ENCODE measurements at regions of chr3 and their contacts with region 1.

Region 1: GRCh38 chr3:30676424-30677346 is 70.3 kb downstream of the TGFBR2 start:
- DNase-seq: no peak
- ATAC-seq: no peak
- H3K4me3 ChIP-seq: no peak overlapping the region
- H3K27ac ChIP-seq: no peak overlapping the region
- H3K4me1 ChIP-seq: peaks cover 2 to 10% of the 10 kb centered on the region in 2 donors
- H3K27me3 ChIP-seq: no peaks in the 10 kb centered on the region

Region 2: DNA sequence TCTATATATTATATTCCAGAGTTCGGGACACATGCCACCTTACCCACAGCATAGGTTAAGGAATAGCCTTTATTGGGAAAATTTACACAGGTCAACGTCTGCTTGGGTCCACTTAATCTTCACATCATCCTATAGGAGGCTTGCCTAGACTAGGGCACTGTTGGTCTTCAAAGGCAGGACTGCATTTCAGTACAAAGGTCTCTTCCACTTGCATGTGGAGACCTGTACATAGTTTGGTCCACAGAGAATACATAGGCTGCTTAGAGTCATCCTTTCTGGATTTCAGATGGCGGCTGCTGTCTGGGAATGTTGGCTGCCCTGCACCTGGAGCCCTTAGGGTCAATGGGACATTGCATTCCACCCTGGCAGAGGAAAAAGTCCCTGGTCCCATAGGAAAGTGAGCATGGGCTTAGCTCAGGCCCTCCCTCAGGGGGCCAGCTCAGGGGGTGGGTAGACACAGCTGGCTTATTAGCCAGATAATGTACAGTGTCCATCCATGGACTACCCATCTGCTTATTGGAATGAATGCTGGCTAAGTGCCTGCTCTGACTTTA is 145.6 kb before region 1 on chr3:
- intact Hi-C with region 1: loop called in 1 of 2 experiments (anchors 5 kb)
- DNase-seq: no peak
- ATAC-seq: no peak
- H3K4me3 ChIP-seq: no peak overlapping the region
- H3K27ac ChIP-seq: no peak overlapping the region
- H3K4me1 ChIP-seq: peaks cover 4 to 8% of the 10 kb centered on the region in 2 donors
- H3K27me3 ChIP-seq: no peaks in the 10 kb centered on the region

Region 3: DNA sequence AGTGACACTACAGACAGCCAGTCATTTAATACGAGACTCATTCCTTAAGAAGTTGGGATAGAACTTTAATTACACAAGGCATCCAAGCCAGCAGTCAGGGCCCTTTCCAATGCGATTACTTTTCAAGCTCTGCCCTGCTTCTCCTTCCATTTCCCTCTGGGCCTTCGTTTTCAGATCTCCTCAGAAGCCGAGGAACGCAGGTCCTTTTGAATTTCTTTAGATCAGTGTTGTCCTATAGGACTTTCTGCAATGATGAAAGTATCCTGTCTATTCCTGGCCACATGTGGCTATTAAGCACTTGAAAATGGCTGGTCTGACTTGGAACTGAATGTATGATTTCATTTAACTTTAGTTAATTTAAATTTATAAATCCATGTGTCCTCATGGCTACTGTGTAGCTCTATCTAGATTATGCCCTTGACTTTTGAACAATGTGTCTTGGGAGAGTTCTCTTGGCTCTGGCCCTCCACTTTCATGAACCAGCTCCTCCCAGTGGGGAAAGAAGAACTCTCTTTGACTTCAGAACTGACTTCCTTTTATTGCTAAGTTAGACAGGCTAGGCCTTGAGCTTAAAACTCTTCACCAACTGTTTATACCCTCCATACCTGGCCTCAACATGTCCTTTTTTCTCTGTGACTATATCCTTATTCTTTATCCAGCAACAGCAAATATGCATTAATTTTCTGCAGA is 47.6 kb before region 1 on chr3:
- intact Hi-C with region 1: loop called in 1 of 2 experiments (anchors 5 kb)
- DNase-seq: no peak
- ATAC-seq: no peak
- H3K4me3 ChIP-seq: no peak overlapping the region
- H3K27ac ChIP-seq: peak overlapping the region in 1 of 2 donors; percentile 40
- H3K4me1 ChIP-seq: peaks cover 5 to 15% of the 10 kb centered on the region in 2 donors
- H3K27me3 ChIP-seq: no peaks in the 10 kb centered on the region